SK-N-SH (cell line): ENCODE measurements at regions of chr4 and their contacts with region 1.

Region 1: GRCh38 chr4:57426779-57427395 is 316.7 kb upstream of the IGFBP7 start:
- DNase-seq: peak; percentile 66
- H3K4me3 ChIP-seq: peak overlapping the region in 1 of 2 experiments; percentile 30; a peak in 1 of 4 replicates
- H3K27ac ChIP-seq: no peak overlapping the region
- H3K4me1 ChIP-seq: peaks cover 3 to 18% of the 10 kb centered on the region in 2 experiments; a peak in 2 of 4 replicates
- H3K27me3 ChIP-seq: no peaks in the 10 kb centered on the region
- CTCF ChIP-seq: peak; percentile 87
- EP300 ChIP-seq: no peak
- RAD21 ChIP-seq: peak; percentile 88

Region 2: DNA sequence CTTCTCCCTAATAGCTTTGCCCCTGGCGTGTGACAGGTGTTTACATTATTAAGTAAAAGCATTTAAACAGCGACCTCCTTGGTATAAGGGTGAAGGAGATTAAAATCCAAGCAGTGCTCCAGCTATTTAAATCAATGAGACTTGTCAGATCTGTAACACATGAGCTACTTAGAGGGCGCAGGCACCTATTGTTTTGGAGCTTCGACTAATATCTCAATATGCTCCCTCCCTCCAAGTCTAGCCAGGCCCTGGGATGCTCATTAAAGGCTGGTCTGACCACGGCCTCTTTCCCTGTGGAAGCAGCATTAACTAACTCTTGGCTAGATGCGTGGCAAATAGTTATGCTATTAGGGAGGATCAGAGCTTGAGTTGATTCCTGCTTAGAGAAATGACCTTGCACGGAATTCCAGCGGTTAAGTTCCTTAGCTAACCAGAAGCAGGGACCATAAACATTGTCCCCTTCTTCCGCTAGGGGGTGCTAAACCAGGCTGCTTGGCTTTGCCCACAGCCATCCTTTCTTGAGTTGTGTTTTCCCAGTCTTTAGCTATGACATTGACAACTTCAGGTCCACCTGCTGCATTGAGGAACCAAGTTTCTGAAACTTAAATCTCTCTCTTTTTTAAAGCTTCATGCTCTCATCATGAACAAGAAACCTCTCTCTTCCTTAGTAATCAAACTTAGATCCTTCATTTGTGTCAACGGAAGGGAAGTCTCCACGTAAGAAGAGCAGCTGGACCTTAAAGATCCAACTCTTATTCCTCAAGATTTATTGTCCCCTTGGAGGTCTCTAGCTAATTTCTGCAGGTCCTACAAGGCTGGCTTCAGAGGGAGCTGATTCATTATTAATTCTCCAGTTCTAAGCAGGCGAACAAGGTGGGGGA is 236.0 kb before region 1 on chr4:
- CTCF ChIA-PET with region 1: no interaction called
- POLR2A ChIA-PET with region 1: no interaction called
- DNase-seq: peak; percentile 49
- H3K4me3 ChIP-seq: peak overlapping the region in 1 of 2 experiments; percentile 14; a peak in 1 of 4 replicates
- H3K27ac ChIP-seq: no peak overlapping the region
- H3K4me1 ChIP-seq: no peaks in the 10 kb centered on the region
- H3K27me3 ChIP-seq: no peaks in the 10 kb centered on the region
- CTCF ChIP-seq: peak; percentile 67
- EP300 ChIP-seq: no peak
- RAD21 ChIP-seq: peak; percentile 28; the same call in 1 of the 2 replicates

Region 3: GRCh38 chr4:57405385-57405784 is 21.5 kb before region 1 on chr4:
- CTCF ChIA-PET with region 1: interaction called, 35 read pairs
- POLR2A ChIA-PET with region 1: no interaction called
- DNase-seq: peak; percentile 5
- H3K4me3 ChIP-seq: no peak overlapping the region
- H3K27ac ChIP-seq: peak overlapping the region in 1 of 2 experiments; percentile 10; a peak in 1 of 4 replicates
- H3K4me1 ChIP-seq: peaks cover 0 to 6% of the 10 kb centered on the region in 2 experiments; a peak in 2 of 4 replicates
- H3K27me3 ChIP-seq: no peaks in the 10 kb centered on the region
- CTCF ChIP-seq: no peak
- EP300 ChIP-seq: peak in 1 of 2 experiments; percentile 34; a peak in 1 of 4 replicates
- RAD21 ChIP-seq: no peak

Region 4: GRCh38 chr4:57410331-57411052 is 16.4 kb before region 1 on chr4:
- CTCF ChIA-PET with region 1: interaction called, 35 read pairs
- POLR2A ChIA-PET with region 1: no interaction called
- DNase-seq: no peak
- H3K4me3 ChIP-seq: no peak overlapping the region
- H3K27ac ChIP-seq: no peak overlapping the region
- H3K4me1 ChIP-seq: no peaks in the 10 kb centered on the region; a peak in 1 of 4 replicates
- H3K27me3 ChIP-seq: no peaks in the 10 kb centered on the region
- CTCF ChIP-seq: no peak
- EP300 ChIP-seq: no peak
- RAD21 ChIP-seq: no peak

Region 5: GRCh38 chr4:57437647-57438046 is 10.8 kb after region 1 on chr4:
- CTCF ChIA-PET with region 1: interaction called, 40 read pairs
- POLR2A ChIA-PET with region 1: no interaction called
- DNase-seq: no peak
- H3K4me3 ChIP-seq: no peak overlapping the region
- H3K27ac ChIP-seq: no peak overlapping the region
- H3K4me1 ChIP-seq: no peaks in the 10 kb centered on the region
- H3K27me3 ChIP-seq: no peaks in the 10 kb centered on the region
- CTCF ChIP-seq: no peak
- EP300 ChIP-seq: no peak
- RAD21 ChIP-seq: no peak

Region 6: DNA sequence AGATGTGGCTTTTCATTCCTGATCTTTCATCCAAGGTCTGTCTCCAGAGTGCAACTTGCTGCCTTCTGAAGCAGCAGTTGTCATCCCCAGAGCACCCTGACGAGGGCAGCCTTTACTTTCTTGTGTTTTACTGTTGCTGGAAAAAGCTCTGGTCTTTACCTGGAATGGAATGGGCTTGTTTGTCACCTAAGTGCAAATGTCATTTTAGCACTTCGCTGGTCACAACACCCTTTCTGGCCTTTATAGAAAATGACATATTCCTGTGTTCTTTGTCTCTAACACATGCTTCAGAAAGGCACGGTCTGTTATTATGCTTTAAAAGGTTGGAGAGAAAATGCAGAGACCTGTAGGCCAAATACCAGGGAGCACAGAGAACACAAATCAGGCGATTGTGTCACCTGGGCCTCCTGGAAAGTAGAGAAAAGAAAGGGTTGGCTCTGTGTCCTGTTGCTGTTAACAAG is 16.0 kb after region 1 on chr4:
- CTCF ChIA-PET with region 1: interaction called, 40 read pairs
- POLR2A ChIA-PET with region 1: no interaction called
- DNase-seq: peak; percentile 54
- H3K4me3 ChIP-seq: peak overlapping the region in 1 of 2 experiments; percentile 46; a peak in 1 of 4 replicates
- H3K27ac ChIP-seq: no peak overlapping the region
- H3K4me1 ChIP-seq: no peaks in the 10 kb centered on the region
- H3K27me3 ChIP-seq: no peaks in the 10 kb centered on the region
- CTCF ChIP-seq: peak; percentile 78
- EP300 ChIP-seq: no peak
- RAD21 ChIP-seq: peak; percentile 93